B cell (primary cell): ENCODE measurements at regions of chr19 and their contacts with region 1.

Region 1: GRCh38 chr19:45862564-45863334 is at the start of gene SYMPK:
- DNase-seq: peak; percentile 98
- ATAC-seq: peak; percentile 95
- H3K4me3 ChIP-seq: peak within 1 kb of the TSS; percentile 66 to 87 (median 83)
- H3K4me3 Mint-ChIP-seq: peak within 1 kb of the TSS; percentile 91
- H3K27ac ChIP-seq: peak within 1 kb of the TSS; percentile 93 to 95
- H3K27ac Mint-ChIP-seq: peak within 1 kb of the TSS; percentile 98
- H3K4me1 ChIP-seq: peaks cover 27 to 33% of the 10 kb centered on the region in 2 donors
- H3K4me1 Mint-ChIP-seq: peaks cover 34% of the 10 kb centered on the region
- H3K27me3 ChIP-seq: peaks cover 0 to 14% (median 6%) of the 10 kb centered on the region in 4 experiments
- H3K27me3 Mint-ChIP-seq: peaks cover 10% of the 10 kb centered on the region
- CTCF ChIP-seq: no peak
- total RNA-seq, gene SYMPK: 131 and 138 TPM in 2 replicates

Region 2: DNA sequence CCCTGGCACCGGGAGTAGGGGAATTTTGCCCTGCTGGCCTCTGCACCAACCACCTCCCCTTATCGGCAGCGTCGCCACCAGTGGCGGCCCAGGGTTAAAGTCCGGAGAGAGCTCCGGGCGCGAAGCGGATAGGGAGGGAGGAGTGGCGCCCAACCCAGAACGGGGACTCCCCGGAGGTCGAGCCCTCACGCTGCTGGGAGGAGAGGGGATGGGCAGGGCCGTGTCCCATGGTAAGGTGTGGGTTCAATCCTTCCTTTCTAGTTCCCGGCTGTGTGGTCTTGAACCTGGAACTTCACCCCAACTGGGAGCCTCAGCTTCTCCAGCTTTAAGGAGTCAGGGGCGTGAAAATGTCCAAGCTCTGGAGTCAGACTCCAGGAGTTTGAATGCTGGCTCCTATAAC is 1137.5 kb before region 1 on chr19:
- CTCF ChIA-PET with region 1: no interaction called
- POLR2A ChIA-PET with region 1: no interaction called
- intact Hi-C with region 1: no loop called
- DNase-seq: no peak
- ATAC-seq: no peak
- H3K4me3 ChIP-seq: no peak overlapping the region
- H3K4me3 Mint-ChIP-seq: no peak overlapping the region
- H3K27ac ChIP-seq: no peak overlapping the region
- H3K27ac Mint-ChIP-seq: no peak overlapping the region
- H3K4me1 ChIP-seq: peaks cover 42 to 65% of the 10 kb centered on the region in 2 donors
- H3K4me1 Mint-ChIP-seq: peaks cover 54% of the 10 kb centered on the region
- H3K27me3 ChIP-seq: no peaks in the 10 kb centered on the region
- H3K27me3 Mint-ChIP-seq: no peaks in the 10 kb centered on the region
- CTCF ChIP-seq: no peak

Region 3: DNA sequence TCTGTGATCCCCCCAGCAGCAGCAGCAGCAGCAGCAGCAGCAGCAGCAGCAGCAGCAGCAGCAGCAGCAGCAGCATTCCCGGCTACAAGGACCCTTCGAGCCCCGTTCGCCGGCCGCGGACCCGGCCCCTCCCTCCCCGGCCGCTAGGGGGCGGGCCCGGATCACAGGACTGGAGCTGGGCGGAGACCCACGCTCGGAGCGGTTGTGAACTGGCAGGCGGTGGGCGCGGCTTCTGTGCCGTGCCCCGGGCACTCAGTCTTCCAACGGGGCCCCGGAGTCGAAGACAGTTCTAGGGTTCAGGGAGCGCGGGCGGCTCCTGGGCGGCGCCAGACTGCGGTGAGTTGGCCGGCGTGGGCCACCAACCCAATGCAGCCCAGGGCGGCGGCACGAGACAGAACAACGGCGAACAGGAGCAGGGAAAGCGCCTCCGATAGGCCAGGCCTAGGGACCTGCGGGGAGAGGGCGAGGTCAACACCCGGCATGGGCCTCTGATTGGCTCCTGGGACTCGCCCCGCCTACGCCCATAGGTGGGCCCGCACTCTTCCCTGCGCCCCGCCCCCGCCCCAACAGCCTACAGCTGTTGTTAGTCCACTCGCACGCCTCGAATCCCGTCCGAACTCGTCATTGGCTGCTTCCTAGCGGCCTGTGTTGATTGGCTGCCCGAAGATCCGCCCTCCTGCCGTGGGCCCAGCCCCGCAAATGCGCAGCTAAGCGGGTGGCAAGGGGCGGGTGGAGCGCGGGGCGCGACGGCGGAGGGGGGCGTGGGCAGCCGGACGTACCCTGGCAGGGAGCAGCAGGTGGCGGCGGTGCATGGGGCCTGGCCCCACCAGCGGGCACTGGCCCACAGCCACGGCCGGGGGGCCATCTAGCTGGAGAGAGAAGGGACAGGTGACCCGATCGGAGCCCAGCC is 92.3 kb before region 1 on chr19:
- CTCF ChIA-PET with region 1: interaction called, 14 read pairs
- POLR2A ChIA-PET with region 1: interaction called, 6 read pairs
- intact Hi-C with region 1: loop called (anchors 1 kb)
- DNase-seq: peak; percentile 95
- ATAC-seq: peak; percentile 68
- H3K4me3 ChIP-seq: peak overlapping the region in 4 of 5 experiments; percentile 71 to 88 (median 82)
- H3K4me3 Mint-ChIP-seq: peak overlapping the region; percentile 90
- H3K27ac ChIP-seq: peak overlapping the region; percentile 29 to 56
- H3K27ac Mint-ChIP-seq: peak overlapping the region; percentile 86
- H3K4me1 ChIP-seq: peaks cover 12 to 32% of the 10 kb centered on the region in 2 donors
- H3K4me1 Mint-ChIP-seq: peaks cover 29% of the 10 kb centered on the region
- H3K27me3 ChIP-seq: peaks cover 0 to 28% (median 8%) of the 10 kb centered on the region in 4 experiments
- H3K27me3 Mint-ChIP-seq: no peaks in the 10 kb centered on the region
- CTCF ChIP-seq: peak; percentile 96

Region 4: DNA sequence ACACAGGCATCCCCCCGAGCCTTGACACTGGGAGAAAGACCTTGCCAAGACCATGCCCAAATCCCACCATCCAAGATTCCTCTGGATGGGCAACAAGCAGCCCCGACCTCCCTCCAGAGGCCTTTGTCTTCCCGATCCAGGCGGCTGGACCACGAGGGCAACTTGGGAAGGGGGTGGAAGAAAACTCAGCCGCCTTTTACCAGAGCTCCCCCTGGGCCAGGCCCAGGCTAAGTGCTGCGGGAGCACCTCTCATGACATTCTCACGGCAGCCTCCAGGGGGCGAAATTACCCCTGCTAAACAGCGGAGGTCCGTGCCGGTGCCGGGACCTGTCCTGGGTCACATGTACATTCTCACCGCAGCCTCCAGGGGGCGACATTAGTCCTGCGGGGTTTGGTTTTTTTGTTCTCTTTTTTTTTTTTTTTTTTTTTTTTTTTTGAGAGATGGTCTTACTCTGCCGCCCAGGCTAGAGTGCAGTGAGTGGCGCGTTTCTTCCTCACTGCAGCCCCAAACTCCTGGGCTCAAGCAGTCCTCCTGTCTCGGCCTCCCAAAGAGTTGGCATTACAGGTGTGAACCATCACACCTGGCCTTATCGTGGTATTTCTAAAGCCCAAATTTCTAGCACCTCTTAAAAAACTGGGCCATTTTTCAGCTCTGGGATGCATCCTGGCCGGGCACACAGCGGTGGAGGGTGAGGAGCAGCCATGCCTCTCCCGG is 45.6 kb before region 1 on chr19:
- CTCF ChIA-PET with region 1: interaction called, 8 read pairs
- POLR2A ChIA-PET with region 1: no interaction called
- intact Hi-C with region 1: loop called (anchors 1 kb)
- DNase-seq: peak; percentile 96
- ATAC-seq: peak; percentile 100
- H3K4me3 ChIP-seq: no peak overlapping the region
- H3K4me3 Mint-ChIP-seq: peak overlapping the region; percentile 54
- H3K27ac ChIP-seq: no peak overlapping the region
- H3K27ac Mint-ChIP-seq: peak overlapping the region; percentile 75
- H3K4me1 ChIP-seq: peaks cover 19 to 23% of the 10 kb centered on the region in 2 donors
- H3K4me1 Mint-ChIP-seq: peaks cover 11% of the 10 kb centered on the region
- H3K27me3 ChIP-seq: peaks cover 0 to 6% (median 2%) of the 10 kb centered on the region in 4 experiments
- H3K27me3 Mint-ChIP-seq: peaks cover 3% of the 10 kb centered on the region
- CTCF ChIP-seq: peak; percentile 97

Region 5: DNA sequence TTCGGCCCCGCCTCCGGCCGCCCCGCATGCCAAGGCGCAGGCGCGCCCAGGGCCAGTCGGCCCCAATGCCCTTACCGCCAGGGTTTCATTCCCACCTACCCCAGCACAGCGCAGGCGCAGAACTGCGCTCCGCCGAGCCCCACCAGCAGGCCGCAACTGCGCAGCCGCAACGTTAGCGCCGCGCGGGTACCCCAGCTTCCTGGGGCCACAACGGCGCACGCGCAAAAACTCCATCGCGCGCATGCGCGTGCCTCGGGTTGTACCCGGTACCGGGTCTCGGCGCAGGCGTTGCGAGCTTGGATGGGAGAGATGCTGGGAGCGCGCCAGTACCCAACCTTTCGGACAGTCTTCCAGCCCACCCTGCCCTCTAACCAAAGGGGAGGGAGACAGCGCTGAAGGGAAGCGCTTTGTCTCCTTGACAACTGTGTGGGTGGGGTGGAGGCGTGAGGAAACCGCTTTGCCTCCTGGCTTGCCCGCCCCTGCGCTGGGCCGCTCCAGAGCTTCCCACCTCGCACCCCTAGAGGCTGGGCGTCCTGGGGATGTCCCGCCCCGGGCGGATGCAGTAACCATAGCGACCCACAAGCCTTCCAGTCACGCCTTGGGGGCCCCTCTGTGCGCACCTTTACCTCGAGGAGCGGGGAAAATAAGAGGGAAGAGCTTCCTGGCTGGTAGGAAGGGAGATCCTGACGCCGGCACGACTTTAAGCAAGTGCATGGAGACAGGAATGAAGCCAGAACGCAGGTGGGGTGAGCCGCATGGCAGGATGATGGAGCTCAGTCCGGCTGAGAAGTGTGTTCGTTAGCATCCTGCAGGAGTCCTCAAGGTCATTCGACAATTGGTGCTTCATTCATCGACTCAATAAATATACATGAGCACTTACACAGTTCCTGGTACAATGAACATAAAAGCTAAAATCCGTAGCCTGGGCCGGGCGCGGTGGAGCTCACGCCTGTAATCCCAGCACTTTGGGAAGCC is 40.2 kb after region 1 on chr19:
- CTCF ChIA-PET with region 1: interaction called, 15 read pairs
- POLR2A ChIA-PET with region 1: interaction called, 9 read pairs
- intact Hi-C with region 1: loop called (anchors 1 kb)
- DNase-seq: peak; percentile 100
- ATAC-seq: peak; percentile 83
- H3K4me3 ChIP-seq: peak overlapping the region; percentile 68 to 88 (median 74)
- H3K4me3 Mint-ChIP-seq: peak overlapping the region; percentile 89
- H3K27ac ChIP-seq: peak overlapping the region; percentile 64 to 70
- H3K27ac Mint-ChIP-seq: peak overlapping the region; percentile 95
- H3K4me1 ChIP-seq: peaks cover 16 to 21% of the 10 kb centered on the region in 2 donors
- H3K4me1 Mint-ChIP-seq: peaks cover 32% of the 10 kb centered on the region
- H3K27me3 ChIP-seq: no peaks in the 10 kb centered on the region
- H3K27me3 Mint-ChIP-seq: no peaks in the 10 kb centered on the region
- CTCF ChIP-seq: no peak

Region 6: DNA sequence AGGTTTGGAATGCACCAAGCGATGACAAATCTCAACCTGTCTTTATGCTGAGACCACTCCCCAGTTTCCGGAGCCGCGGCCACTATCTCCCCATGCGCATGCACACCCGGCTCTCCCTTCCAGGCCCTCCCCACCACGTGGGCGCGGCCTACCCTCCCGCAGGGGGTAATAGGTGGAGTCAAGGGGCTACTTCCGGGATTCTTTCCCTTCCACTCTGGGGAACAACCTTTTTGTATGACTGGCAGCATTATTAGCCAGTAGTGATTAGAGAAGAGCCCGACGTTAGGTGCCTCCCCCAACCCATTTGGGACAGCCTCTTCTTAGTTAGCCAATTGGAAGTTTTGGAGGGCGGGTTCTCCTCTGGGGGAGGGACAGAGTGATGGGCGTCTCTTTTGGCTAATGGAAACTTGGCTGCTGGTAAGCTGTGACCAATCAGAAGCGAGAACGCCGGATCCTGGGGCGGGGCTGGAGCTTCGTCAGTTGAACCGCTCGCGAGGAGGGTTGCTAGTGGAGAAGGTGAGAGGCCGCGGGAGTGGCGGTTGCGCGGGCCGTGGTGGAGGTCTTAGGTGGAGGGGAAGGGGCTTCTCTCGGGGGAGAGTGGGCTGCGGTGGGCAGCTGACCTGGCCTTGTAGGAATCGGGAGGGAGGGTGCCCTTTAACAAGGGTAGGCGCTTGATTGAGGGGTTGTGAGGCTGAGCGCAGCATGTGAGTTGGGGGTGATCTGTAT is 132.4 kb after region 1 on chr19 and contains the start of gene CCDC61:
- CTCF ChIA-PET with region 1: no interaction called
- POLR2A ChIA-PET with region 1: no interaction called
- intact Hi-C with region 1: loop called (anchors 1 kb)
- DNase-seq: peak; percentile 99
- ATAC-seq: peak; percentile 93
- H3K4me3 ChIP-seq: peak within 1 kb of the TSS; percentile 71 to 92 (median 78)
- H3K4me3 Mint-ChIP-seq: peak within 1 kb of the TSS; percentile 58
- H3K27ac ChIP-seq: peak within 1 kb of the TSS; percentile 55 to 84
- H3K27ac Mint-ChIP-seq: no peak within 1 kb of the TSS
- H3K4me1 ChIP-seq: peaks cover 19 to 21% of the 10 kb centered on the region in 2 donors
- H3K4me1 Mint-ChIP-seq: peaks cover 27% of the 10 kb centered on the region
- H3K27me3 ChIP-seq: peaks cover 0 to 9% (median 5%) of the 10 kb centered on the region in 4 experiments
- H3K27me3 Mint-ChIP-seq: peaks cover 21% of the 10 kb centered on the region
- CTCF ChIP-seq: no peak
- total RNA-seq, gene CCDC61: 30.1 and 37.0 TPM in 2 replicates

Region 7: GRCh38 chr19:46850228-46851203 is 987.8 kb after region 1 on chr19 and contains the start of gene AP2S1:
- CTCF ChIA-PET with region 1: no interaction called
- POLR2A ChIA-PET with region 1: no interaction called
- intact Hi-C with region 1: loop called (anchors 2 kb)
- DNase-seq: peak; percentile 95
- ATAC-seq: peak; percentile 93
- H3K4me3 ChIP-seq: peak within 1 kb of the TSS; percentile 59 to 89 (median 82)
- H3K4me3 Mint-ChIP-seq: peak within 1 kb of the TSS; percentile 98
- H3K27ac ChIP-seq: peak within 1 kb of the TSS; percentile 58 to 81
- H3K27ac Mint-ChIP-seq: peak within 1 kb of the TSS; percentile 86
- H3K4me1 ChIP-seq: peaks cover 17 to 24% of the 10 kb centered on the region in 2 donors
- H3K4me1 Mint-ChIP-seq: peaks cover 32% of the 10 kb centered on the region
- H3K27me3 ChIP-seq: no peaks in the 10 kb centered on the region
- H3K27me3 Mint-ChIP-seq: no peaks in the 10 kb centered on the region
- CTCF ChIP-seq: no peak
- total RNA-seq, gene AP2S1: 47.2 and 49.3 TPM in 2 replicates